ENCODE measurements at regions of chr11 and their contacts with region 1.

Region 1: DNA sequence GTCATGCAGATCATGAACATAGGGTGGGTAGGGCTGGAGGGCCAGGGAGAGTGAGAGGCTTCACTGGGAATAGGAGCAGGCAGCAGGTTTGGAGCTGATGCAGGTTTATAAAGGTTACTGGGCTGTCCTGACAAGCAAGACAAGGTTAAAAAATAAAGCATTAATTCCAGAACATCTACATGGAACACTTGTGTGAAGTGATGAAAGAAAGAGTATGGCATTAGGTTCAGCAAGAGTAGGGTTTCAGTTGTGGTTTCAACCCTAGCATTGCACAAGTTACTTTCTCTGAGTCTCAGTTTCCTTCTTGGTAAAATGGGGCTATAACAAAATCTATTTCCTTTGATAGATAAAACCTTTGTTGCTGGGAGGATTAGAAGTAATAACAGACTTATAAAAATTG is 114.6 kb upstream of the SESN3 start:
- DNase-seq: peak; percentile 29
- H3K4me3 Mint-ChIP-seq: no peak overlapping the region
- H3K27ac Mint-ChIP-seq: no peak overlapping the region
- H3K4me1 Mint-ChIP-seq: peaks cover 18% of the 10 kb centered on the region
- H3K27me3 Mint-ChIP-seq: no peaks in the 10 kb centered on the region

Region 2: GRCh38 chr11:95299078-95299679 is 46.5 kb before region 1 on chr11:
- CTCF ChIA-PET with region 1: no interaction called
- intact Hi-C with region 1: loop called (anchors 2 kb)
- DNase-seq: peak; percentile 24
- H3K4me3 Mint-ChIP-seq: no peak overlapping the region
- H3K27ac Mint-ChIP-seq: peak overlapping the region; percentile 37
- H3K4me1 Mint-ChIP-seq: peaks cover 31% of the 10 kb centered on the region
- H3K27me3 Mint-ChIP-seq: no peaks in the 10 kb centered on the region

Region 3: GRCh38 chr11:95734009-95734572 is 388.4 kb after region 1 on chr11:
- CTCF ChIA-PET with region 1: no interaction called
- intact Hi-C with region 1: no loop called
- DNase-seq: peak; percentile 14
- H3K4me3 Mint-ChIP-seq: no peak overlapping the region
- H3K27ac Mint-ChIP-seq: no peak overlapping the region
- H3K4me1 Mint-ChIP-seq: peaks cover 11% of the 10 kb centered on the region
- H3K27me3 Mint-ChIP-seq: no peaks in the 10 kb centered on the region